Natural killer cell (primary cell): ENCODE measurements at regions of chr3 and their contacts with region 1.

Region 1: GRCh38 chr3:187164885-187165543 is 25.7 kb upstream of the RPL39L start:
- DNase-seq: peak in 1 of 2 donors; percentile 85
- ATAC-seq: peak; percentile 67 to 75 (median 71)
- H3K4me3 ChIP-seq: no peak overlapping the region
- H3K4me3 Mint-ChIP-seq: no peak overlapping the region
- H3K27ac ChIP-seq: no peak overlapping the region
- H3K27ac Mint-ChIP-seq: no peak overlapping the region
- H3K4me1 ChIP-seq: no peaks in the 10 kb centered on the region
- H3K4me1 Mint-ChIP-seq: no peaks in the 10 kb centered on the region
- H3K27me3 ChIP-seq: no peaks in the 10 kb centered on the region
- H3K27me3 Mint-ChIP-seq: peaks cover 26 to 50% of the 10 kb centered on the region in 2 donors
- CTCF ChIP-seq: peak; percentile 81

Region 2: GRCh38 chr3:186849374-186849975 is 315.5 kb before region 1 on chr3:
- intact Hi-C with region 1: loop called (anchors 1 kb)
- DNase-seq: peak in 1 of 2 donors; percentile 78
- ATAC-seq: peak; percentile 68 to 82 (median 70)
- H3K4me3 ChIP-seq: no peak overlapping the region
- H3K4me3 Mint-ChIP-seq: peak overlapping the region; percentile 7
- H3K27ac ChIP-seq: no peak overlapping the region
- H3K27ac Mint-ChIP-seq: no peak overlapping the region
- H3K4me1 ChIP-seq: no peaks in the 10 kb centered on the region
- H3K4me1 Mint-ChIP-seq: peaks cover 16 to 25% of the 10 kb centered on the region in 2 donors
- H3K27me3 ChIP-seq: no peaks in the 10 kb centered on the region
- H3K27me3 Mint-ChIP-seq: peaks cover 14 to 27% of the 10 kb centered on the region in 2 donors
- CTCF ChIP-seq: peak; percentile 56